Testis (tissue), 5 donors: ENCODE measurements at regions of chr3 and their contacts with region 1.

Region 1: GRCh38 chr3:66816090-66816761 is 181.9 kb upstream of the KBTBD8 start:
- DNase-seq: peak; percentile 17
- H3K4me3 ChIP-seq: no peak overlapping the region
- H3K27ac ChIP-seq: no peak overlapping the region
- H3K4me1 ChIP-seq: no peaks in the 10 kb centered on the region
- H3K27me3 ChIP-seq: no peaks in the 10 kb centered on the region
- CTCF ChIP-seq: peak; percentile 40 to 63 (median 45)
- POLR2A ChIP-seq: no peak

Region 2: GRCh38 chr3:66280304-66280703 is 535.9 kb before region 1 on chr3:
- intact Hi-C with region 1: loop called (anchors 10 kb)
- DNase-seq: no peak
- H3K4me3 ChIP-seq: no peak overlapping the region
- H3K27ac ChIP-seq: no peak overlapping the region
- H3K4me1 ChIP-seq: no peaks in the 10 kb centered on the region
- H3K27me3 ChIP-seq: no peaks in the 10 kb centered on the region
- CTCF ChIP-seq: no peak
- POLR2A ChIP-seq: no peak

Region 3: GRCh38 chr3:66407611-66408218 is 408.5 kb before region 1 on chr3:
- intact Hi-C with region 1: loop called (anchors 10 kb)
- DNase-seq: peak; percentile 80
- H3K4me3 ChIP-seq: no peak overlapping the region
- H3K27ac ChIP-seq: no peak overlapping the region
- H3K4me1 ChIP-seq: peaks cover 7% of the 10 kb centered on the region
- H3K27me3 ChIP-seq: no peaks in the 10 kb centered on the region
- CTCF ChIP-seq: peak; percentile 57 to 83 (median 69)
- POLR2A ChIP-seq: no peak